ENCODE measurements at regions of chr17 and their contacts with region 1.

Region 1: DNA sequence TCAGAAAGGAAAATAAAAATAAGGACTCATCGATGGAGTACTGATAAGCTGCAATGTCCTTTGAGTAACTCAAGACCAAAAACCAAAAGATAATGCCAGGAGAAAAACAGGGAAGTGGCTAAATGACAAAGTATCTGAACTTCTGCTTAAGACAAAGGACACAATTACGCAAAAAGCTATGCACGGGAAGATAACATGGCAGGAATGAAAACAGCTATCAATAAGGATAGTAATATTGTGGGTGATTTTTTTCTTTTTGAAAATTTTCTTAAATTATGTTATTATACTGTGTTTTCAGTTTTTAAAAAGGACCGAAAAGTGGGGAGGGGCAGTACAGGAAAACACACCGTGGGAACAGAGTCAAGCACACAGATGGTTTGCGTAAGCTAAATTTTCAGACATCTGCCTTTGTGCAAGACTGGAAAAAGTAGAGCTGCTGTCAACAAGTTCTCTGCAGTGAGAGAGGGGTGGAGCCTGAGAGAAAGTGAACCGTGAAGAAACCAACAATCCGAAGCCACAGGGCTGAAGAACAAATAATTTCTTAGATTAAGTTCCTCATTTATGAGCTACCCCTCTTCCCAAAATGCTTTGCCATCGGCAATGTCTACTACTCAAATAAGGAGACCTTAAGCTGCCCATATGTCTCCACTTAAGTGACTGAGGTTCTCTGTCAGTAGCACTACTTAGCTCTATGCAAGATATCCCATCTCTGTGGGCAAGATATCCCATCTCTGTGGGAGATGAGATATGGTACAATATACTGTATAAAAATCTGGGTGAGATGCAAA is 99.9 kb upstream of the CORO6 start:
- DNase-seq: peak; percentile 15 to 82 (median 43)
- ATAC-seq: peak; percentile 76
- H3K4me3 ChIP-seq: peak overlapping the region; percentile 30
- H3K4me3 Mint-ChIP-seq: peak overlapping the region; percentile 82
- H3K27ac ChIP-seq: peak overlapping the region; percentile 73 to 79
- H3K27ac Mint-ChIP-seq: peak overlapping the region; percentile 87
- H3K4me1 ChIP-seq: peaks cover 53% of the 10 kb centered on the region
- H3K4me1 Mint-ChIP-seq: peaks cover 85% of the 10 kb centered on the region
- H3K27me3 ChIP-seq: no peaks in the 10 kb centered on the region
- H3K27me3 Mint-ChIP-seq: no peaks in the 10 kb centered on the region
- CTCF ChIP-seq: no peak

Region 2: DNA sequence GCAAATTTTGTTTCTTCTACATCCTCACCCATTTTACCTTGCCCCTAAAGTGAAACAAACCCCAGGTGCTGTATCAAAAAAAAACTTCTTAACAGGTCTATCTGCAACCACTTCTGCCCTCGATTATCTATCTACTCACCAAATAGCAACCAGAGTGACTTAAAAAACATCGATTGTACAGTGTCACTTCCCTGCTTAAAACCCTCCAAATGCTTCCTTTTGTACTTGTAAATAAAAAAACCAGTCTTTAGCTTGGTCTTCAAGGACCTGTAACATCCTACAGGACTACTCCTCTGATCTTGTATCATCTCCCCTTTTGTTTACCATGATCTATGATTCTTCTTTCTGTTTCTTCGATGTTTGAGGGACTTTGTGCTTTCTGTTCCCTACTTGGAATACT is 17.2 kb before region 1 on chr17:
- CTCF ChIA-PET with region 1: interaction called, 4 read pairs
- POLR2A ChIA-PET with region 1: interaction called, 77 read pairs
- intact Hi-C with region 1: loop called in 1 of 2 experiments (anchors 1 kb)
- DNase-seq: peak in 3 of 14 experiments; percentile 43 to 63 (median 50)
- ATAC-seq: no peak
- H3K4me3 ChIP-seq: peak overlapping the region; percentile 46
- H3K4me3 Mint-ChIP-seq: peak overlapping the region; percentile 71
- H3K27ac ChIP-seq: peak overlapping the region; percentile 81 to 91
- H3K27ac Mint-ChIP-seq: peak overlapping the region; percentile 92
- H3K4me1 ChIP-seq: peaks cover 37% of the 10 kb centered on the region
- H3K4me1 Mint-ChIP-seq: peaks cover 61% of the 10 kb centered on the region
- H3K27me3 ChIP-seq: no peaks in the 10 kb centered on the region
- H3K27me3 Mint-ChIP-seq: no peaks in the 10 kb centered on the region
- CTCF ChIP-seq: no peak

Region 3: GRCh38 chr17:29710891-29711418 is 11.7 kb before region 1 on chr17:
- CTCF ChIA-PET with region 1: interaction called, 5 read pairs
- POLR2A ChIA-PET with region 1: interaction called, 77 read pairs
- intact Hi-C with region 1: loop called in 1 of 2 experiments (anchors 1 kb)
- DNase-seq: peak in 1 of 14 experiments; percentile 23
- ATAC-seq: no peak
- H3K4me3 ChIP-seq: no peak overlapping the region
- H3K4me3 Mint-ChIP-seq: no peak overlapping the region
- H3K27ac ChIP-seq: no peak overlapping the region
- H3K27ac Mint-ChIP-seq: peak overlapping the region; percentile 92
- H3K4me1 ChIP-seq: peaks cover 29% of the 10 kb centered on the region
- H3K4me1 Mint-ChIP-seq: peaks cover 87% of the 10 kb centered on the region
- H3K27me3 ChIP-seq: no peaks in the 10 kb centered on the region
- H3K27me3 Mint-ChIP-seq: no peaks in the 10 kb centered on the region
- CTCF ChIP-seq: no peak

Region 4: GRCh38 chr17:29732613-29733012 is 10.0 kb after region 1 on chr17:
- CTCF ChIA-PET with region 1: interaction called, 6 read pairs
- POLR2A ChIA-PET with region 1: interaction called, 11 read pairs
- intact Hi-C with region 1: no loop called
- DNase-seq: no peak
- ATAC-seq: no peak
- H3K4me3 ChIP-seq: no peak overlapping the region
- H3K4me3 Mint-ChIP-seq: no peak overlapping the region
- H3K27ac ChIP-seq: no peak overlapping the region
- H3K27ac Mint-ChIP-seq: peak overlapping the region; percentile 69
- H3K4me1 ChIP-seq: peaks cover 8% of the 10 kb centered on the region
- H3K4me1 Mint-ChIP-seq: peaks cover 61% of the 10 kb centered on the region
- H3K27me3 ChIP-seq: no peaks in the 10 kb centered on the region
- H3K27me3 Mint-ChIP-seq: no peaks in the 10 kb centered on the region
- CTCF ChIP-seq: no peak

Region 5: DNA sequence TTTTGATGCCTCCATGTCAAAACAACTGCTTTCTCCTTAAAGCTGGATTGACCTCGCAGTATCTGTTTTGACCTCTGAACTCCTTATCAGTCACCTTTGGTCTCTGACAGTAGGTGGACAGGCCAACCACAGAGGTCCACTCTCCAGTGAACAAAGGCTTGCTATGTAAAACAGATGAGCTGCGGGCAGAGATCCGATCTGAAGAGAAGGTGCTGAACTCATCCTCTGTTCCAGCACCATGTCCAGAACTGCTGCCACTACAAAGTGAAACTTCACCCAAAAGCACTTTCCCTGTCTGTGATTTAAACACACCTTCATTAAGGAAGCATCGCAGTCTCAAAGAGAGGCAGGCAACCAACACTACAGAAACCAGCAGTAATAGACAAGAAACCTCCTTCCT is 17.4 kb after region 1 on chr17:
- CTCF ChIA-PET with region 1: interaction called, 3 read pairs
- POLR2A ChIA-PET with region 1: interaction called, 23 read pairs
- intact Hi-C with region 1: loop called in 1 of 2 experiments (anchors 2 kb)
- DNase-seq: peak in 2 of 14 experiments; percentile 19 to 25
- ATAC-seq: peak; percentile 51
- H3K4me3 ChIP-seq: no peak overlapping the region
- H3K4me3 Mint-ChIP-seq: peak overlapping the region; percentile 42
- H3K27ac ChIP-seq: peak overlapping the region in 1 of 2 donors; percentile 23
- H3K27ac Mint-ChIP-seq: peak overlapping the region; percentile 89
- H3K4me1 ChIP-seq: peaks cover 20% of the 10 kb centered on the region
- H3K4me1 Mint-ChIP-seq: peaks cover 59% of the 10 kb centered on the region
- H3K27me3 ChIP-seq: no peaks in the 10 kb centered on the region
- H3K27me3 Mint-ChIP-seq: no peaks in the 10 kb centered on the region
- CTCF ChIP-seq: no peak

Region 6: GRCh38 chr17:29789196-29790170 is 66.9 kb after region 1 on chr17:
- CTCF ChIA-PET with region 1: no interaction called
- POLR2A ChIA-PET with region 1: no interaction called
- intact Hi-C with region 1: no loop called
- DNase-seq: no peak
- ATAC-seq: no peak
- H3K4me3 ChIP-seq: no peak overlapping the region
- H3K4me3 Mint-ChIP-seq: no peak overlapping the region
- H3K27ac ChIP-seq: no peak overlapping the region
- H3K27ac Mint-ChIP-seq: no peak overlapping the region
- H3K4me1 ChIP-seq: no peaks in the 10 kb centered on the region
- H3K4me1 Mint-ChIP-seq: no peaks in the 10 kb centered on the region
- H3K27me3 ChIP-seq: no peaks in the 10 kb centered on the region
- H3K27me3 Mint-ChIP-seq: no peaks in the 10 kb centered on the region
- CTCF ChIP-seq: no peak

Measured in CD4-positive, alpha-beta T cell (primary cell).